AG04449 (cell line): ENCODE measurements at regions of chr1 and their contacts with region 1.

Region 1: GRCh38 chr1:109099938-109100773 is 9.6 kb downstream of the TMEM167B start:
- DNase-seq: peak; percentile 82
- H3K4me3 ChIP-seq: peak overlapping the region; percentile 99
- CTCF ChIP-seq: peak; percentile 94

Region 2: DNA sequence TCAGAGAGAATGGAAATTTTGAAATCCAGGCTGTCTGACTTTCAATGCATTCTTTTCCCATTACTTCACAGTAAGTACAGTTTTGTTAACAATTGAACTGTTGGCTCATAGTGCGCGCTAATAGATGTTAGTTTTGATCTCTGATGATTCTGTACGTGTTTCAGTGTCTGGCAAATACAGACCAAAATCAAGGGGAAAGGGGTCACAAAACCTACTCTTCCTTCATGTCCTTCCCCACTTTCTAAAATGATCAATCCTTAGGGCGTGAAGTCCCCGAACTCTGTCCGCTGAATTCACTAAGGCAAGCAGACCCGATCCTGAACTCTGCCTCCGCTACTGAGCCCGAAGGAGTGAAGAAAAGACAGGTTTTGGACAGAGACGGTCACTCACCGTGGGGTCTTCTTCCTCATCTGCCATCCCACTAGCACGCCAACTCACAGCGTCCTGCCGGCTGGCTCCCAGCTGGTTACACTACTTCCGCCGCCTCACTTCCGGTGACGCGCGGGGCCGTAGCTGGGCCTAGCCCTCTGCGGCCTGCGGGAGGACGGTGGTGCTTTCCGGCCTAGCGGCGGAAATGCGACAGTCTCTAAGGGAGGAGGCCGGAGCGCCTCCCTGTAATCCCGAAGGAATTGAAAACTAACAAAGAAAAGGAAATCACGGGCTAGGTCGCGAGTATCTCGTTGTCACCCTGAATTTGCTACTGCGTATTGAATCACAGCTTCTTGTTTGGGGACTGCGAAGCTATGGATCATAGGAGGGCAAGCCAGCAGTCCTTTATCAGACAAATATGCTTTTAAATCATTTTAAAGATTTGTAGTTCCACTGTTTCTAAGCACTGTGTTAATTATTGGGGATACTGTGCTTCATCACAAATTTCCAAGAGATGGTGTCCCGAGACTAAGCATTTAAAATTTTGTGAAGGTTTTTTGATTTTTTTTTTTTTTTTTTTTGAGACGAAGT is 24.3 kb before region 1 on chr1 and contains the start of gene TAF13:
- CTCF ChIA-PET with region 1: interaction called, 6 read pairs
- POLR2A ChIA-PET with region 1: interaction called, 12 read pairs
- DNase-seq: peak; percentile 82
- H3K4me3 ChIP-seq: peak within 1 kb of the TSS; percentile 87
- CTCF ChIP-seq: peak; percentile 36

Region 3: DNA sequence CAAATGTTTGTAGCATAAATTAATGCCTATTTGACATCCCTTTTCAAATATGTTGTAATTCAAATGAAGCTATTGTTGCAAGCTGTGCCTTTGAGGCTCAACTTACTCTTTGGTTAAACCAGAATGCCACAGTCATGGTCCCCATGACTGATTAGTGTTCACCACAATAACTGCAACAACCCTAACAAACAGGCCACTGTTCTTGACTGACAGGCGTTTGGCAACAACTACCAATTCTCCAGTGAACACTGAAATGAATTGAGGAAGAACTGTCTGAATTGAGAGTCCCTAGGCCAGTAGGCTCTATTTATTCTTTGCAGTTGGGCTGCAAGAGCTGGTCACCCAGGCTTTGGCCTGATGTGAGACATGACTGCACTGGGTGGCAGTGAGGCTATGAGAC is 16.2 kb before region 1 on chr1:
- CTCF ChIA-PET with region 1: interaction called, 9 read pairs
- POLR2A ChIA-PET with region 1: interaction called, 12 read pairs
- DNase-seq: no peak
- H3K4me3 ChIP-seq: no peak overlapping the region
- CTCF ChIP-seq: no peak

Region 4: DNA sequence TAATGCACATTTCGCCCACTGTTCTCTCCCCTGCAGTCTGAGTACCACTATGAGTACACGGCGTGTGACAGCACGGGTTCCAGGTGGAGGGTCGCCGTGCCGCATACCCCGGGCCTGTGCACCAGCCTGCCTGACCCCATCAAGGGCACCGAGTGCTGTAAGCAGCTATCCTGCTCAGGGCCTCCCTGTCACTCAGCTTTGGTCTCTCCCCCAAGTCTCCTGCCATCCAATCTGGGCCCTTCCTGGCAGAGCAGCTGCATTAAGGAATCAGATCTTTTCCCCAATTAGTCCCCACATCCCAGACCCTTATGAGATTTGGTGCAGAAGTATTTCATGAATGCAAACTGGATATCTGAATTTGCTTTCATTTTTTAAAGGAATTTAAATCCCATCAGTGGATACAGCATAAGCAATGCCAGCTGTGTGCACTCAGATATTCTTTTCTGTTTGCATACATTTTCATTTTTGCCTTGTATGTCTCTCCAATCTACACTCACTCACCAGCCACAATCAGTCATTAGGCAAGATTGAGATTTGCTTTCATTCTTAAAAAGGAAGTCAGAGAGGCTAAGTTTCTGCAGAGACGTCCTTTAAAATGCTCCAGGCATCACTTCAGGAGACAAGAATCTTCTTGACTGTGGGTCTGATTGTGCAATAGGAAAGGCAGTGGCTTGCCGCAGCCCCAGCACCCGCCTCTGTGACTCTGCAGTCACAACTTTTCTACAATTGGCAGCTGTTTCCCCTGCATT is 61.9 kb after region 1 on chr1:
- CTCF ChIA-PET with region 1: interaction called, 5 read pairs
- POLR2A ChIA-PET with region 1: interaction called, 10 read pairs
- DNase-seq: peak; percentile 87
- H3K4me3 ChIP-seq: peak overlapping the region; percentile 44
- CTCF ChIP-seq: no peak